MCF 10A (cell line): ENCODE measurements at regions of chr11 and their contacts with region 1.

Region 1: DNA sequence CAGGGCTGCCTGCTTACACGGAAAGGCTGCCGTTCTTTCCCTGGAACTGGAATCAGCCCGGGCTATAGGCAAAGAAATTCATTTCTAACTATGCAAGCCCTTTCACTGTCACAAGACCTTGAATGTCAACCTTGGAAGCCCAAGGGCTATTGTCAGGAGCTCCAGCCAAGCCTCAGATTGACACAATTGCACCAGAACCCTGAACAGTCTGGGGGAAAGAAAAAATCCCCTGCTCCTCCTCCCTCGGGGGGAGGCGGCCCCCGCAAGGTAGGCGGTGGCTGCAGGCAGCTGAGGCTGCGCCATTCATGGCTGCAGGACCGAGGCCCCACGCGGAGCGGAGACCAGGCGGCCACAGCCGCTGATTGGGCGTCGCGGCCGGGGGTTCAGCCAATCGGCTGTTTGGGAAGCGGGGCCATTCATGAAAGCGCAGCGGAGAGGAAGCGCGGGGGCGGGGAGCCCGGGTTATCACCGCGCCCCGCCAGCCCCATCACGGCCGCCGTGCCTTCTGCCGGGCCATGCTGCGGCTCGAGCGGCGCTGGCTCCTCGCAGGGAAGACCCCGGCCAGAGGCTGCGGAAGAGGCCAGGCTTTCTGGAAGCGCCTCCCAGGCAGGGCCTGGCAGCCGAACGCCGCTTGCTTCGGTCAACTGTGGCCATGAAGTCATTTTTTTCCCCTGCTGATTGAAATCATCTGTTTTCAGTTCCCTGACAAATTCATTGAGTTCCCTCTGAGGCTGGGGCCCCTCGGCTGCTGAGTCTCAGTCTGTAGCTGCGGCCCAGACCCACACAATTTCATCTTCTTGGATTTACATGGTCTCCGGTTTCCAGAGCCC is 38.1 kb upstream of the LINC01488 start:
- DNase-seq: peak; percentile 80
- H3K4me3 Mint-ChIP-seq: no peak overlapping the region
- H3K27ac Mint-ChIP-seq: no peak overlapping the region
- H3K4me1 Mint-ChIP-seq: peaks cover 21% of the 10 kb centered on the region
- H3K27me3 Mint-ChIP-seq: no peaks in the 10 kb centered on the region
- CTCF ChIP-seq: no peak

Region 2: GRCh38 chr11:69280994-69281393 is 162.4 kb before region 1 on chr11:
- CTCF ChIA-PET with region 1: no interaction called
- POLR2A ChIA-PET with region 1: no interaction called
- intact Hi-C with region 1: loop called (anchors 5 kb)
- DNase-seq: peak; percentile 84
- H3K4me3 Mint-ChIP-seq: peak overlapping the region; percentile 33
- H3K27ac Mint-ChIP-seq: peak overlapping the region; percentile 81
- H3K4me1 Mint-ChIP-seq: no peaks in the 10 kb centered on the region
- H3K27me3 Mint-ChIP-seq: no peaks in the 10 kb centered on the region
- CTCF ChIP-seq: no peak

Region 3: DNA sequence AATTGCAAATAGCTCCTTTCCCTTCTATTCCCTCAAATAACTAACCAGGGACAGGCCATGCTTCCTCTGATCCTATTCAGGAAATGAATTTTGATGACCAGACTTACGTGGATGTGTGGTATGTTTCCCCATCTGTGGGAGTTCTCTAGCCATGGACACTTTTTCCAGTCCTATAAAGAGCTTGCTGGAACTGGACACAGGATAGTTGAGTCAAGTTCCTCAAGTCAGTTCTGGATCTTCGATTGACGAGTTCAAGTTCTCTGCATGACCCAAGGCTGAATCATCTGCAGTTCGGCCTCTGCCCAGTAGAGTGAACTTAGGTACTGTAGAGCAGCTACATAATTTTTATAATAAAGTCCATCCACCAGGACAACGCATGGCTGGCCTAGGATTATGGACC is 144.9 kb after region 1 on chr11:
- CTCF ChIA-PET with region 1: no interaction called
- POLR2A ChIA-PET with region 1: no interaction called
- intact Hi-C with region 1: loop called (anchors 5 kb)
- DNase-seq: peak; percentile 61
- H3K4me3 Mint-ChIP-seq: no peak overlapping the region
- H3K27ac Mint-ChIP-seq: peak overlapping the region; percentile 78
- H3K4me1 Mint-ChIP-seq: peaks cover 18% of the 10 kb centered on the region
- H3K27me3 Mint-ChIP-seq: no peaks in the 10 kb centered on the region
- CTCF ChIP-seq: peak; percentile 39